Activated T-helper 2 cell treated with anti-CD3 and anti-CD28 coated beads, Interferon-gamma antibody, Interleukin-2, Interleukin-4, amounts not matched to agents 10 μg/mL and 5 μg/mL and 100 μg/mL, durations not matched to agents 14 hours and 24 hours and 36 hours (primary cell): ENCODE measurements at regions of chr2 and their contacts with region 1.

Region 1: DNA sequence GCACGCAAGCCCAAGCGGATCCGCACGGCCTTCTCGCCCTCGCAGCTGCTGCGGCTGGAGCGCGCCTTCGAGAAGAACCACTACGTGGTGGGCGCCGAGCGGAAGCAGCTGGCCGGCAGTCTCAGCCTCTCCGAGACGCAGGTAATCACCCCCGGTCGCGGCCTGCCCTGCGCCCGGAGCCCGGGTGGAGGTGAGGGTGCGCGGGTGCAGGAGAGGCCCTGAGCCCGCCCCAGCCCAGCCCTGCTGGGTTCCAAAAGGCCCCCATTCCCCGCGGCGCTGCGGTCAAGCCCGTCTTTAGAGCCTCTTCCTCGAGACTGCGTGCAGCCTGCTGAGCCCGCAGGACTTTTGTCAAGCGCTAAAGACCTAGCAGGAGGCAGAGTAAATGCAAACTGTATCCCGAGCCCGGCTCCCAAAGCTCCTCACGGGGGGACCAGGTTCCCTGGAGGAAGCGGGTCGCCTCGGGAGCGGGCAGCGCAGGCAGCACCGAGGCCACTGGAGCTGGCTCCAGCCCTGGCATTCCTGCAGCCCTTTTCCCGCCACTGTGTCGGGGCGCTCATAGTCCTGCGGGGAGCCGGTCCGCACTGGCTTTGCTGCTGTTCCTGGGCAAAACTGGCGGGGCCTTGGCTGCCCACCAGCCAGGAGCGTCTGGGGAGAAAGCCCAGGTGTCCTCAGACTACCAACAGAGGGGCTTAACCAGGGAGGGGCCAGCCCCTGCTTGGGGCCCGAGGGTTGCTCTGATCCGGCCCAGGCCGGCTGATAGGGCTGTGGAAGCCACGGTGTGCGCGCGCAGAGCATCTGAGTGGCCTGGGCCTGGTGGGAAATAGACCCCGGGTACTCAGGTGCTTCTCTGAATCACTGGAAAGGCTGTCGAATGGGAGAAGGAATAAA is 7.3 kb downstream of the EMX1 start:
- DNase-seq: no peak
- H3K4me3 Mint-ChIP-seq: no peak overlapping the region
- H3K27ac Mint-ChIP-seq: no peak overlapping the region
- H3K4me1 Mint-ChIP-seq: no peaks in the 10 kb centered on the region
- H3K27me3 Mint-ChIP-seq: peaks cover 50% of the 10 kb centered on the region

Region 2: GRCh38 chr2:72144632-72145288 is 779.8 kb before region 1 on chr2:
- intact Hi-C with region 1: loop called (anchors 2 kb)
- DNase-seq: no peak
- H3K4me3 Mint-ChIP-seq: no peak overlapping the region
- H3K27ac Mint-ChIP-seq: no peak overlapping the region
- H3K4me1 Mint-ChIP-seq: peaks cover 8% of the 10 kb centered on the region
- H3K27me3 Mint-ChIP-seq: peaks cover 51% of the 10 kb centered on the region

Region 3: GRCh38 chr2:73243884-73244570 is 319.4 kb after region 1 on chr2:
- intact Hi-C with region 1: no loop called
- DNase-seq: no peak
- H3K4me3 Mint-ChIP-seq: no peak overlapping the region
- H3K27ac Mint-ChIP-seq: no peak overlapping the region
- H3K4me1 Mint-ChIP-seq: peaks cover 17% of the 10 kb centered on the region
- H3K27me3 Mint-ChIP-seq: no peaks in the 10 kb centered on the region

Region 4: GRCh38 chr2:73293534-73294171 is 369.1 kb after region 1 on chr2 and contains the start of gene EGR4:
- intact Hi-C with region 1: loop called (anchors 10 kb)
- DNase-seq: peak; percentile 87
- H3K4me3 Mint-ChIP-seq: peak within 1 kb of the TSS; percentile 69
- H3K27ac Mint-ChIP-seq: no peak within 1 kb of the TSS
- H3K4me1 Mint-ChIP-seq: peaks cover 5% of the 10 kb centered on the region
- H3K27me3 Mint-ChIP-seq: peaks cover 67% of the 10 kb centered on the region
- total RNA-seq, gene EGR4: 0.46 and 0.53 TPM in 2 replicates